HCT116 (cell line): ENCODE measurements at regions of chr14 and their contacts with region 1.

Region 1: GRCh38 chr14:57871459-57872080 is 5.7 kb upstream of the SLC35F4 start:
- DNase-seq: peak; percentile 35
- ATAC-seq: peak; percentile 88
- H3K4me3 ChIP-seq: no peak overlapping the region
- H3K27ac ChIP-seq: no peak overlapping the region
- H3K4me1 ChIP-seq: no peaks in the 10 kb centered on the region
- H3K27me3 ChIP-seq: peaks cover 21% of the 10 kb centered on the region; the same call in 1 of the 2 replicates
- CTCF ChIP-seq: peak; percentile 64 to 89 (median 83); a peak in 5 of 6 replicates
- POLR2A ChIP-seq: no peak
- RAD21 ChIP-seq: peak; percentile 74

Region 2: GRCh38 chr14:57461777-57462320 is 409.7 kb before region 1 on chr14:
- CTCF ChIA-PET with region 1: no interaction called
- POLR2A ChIA-PET with region 1: no interaction called
- RAD21 ChIA-PET with region 1: no interaction called
- intact Hi-C with region 1: no loop called
- DNase-seq: no peak
- ATAC-seq: 0 out of 2 replicates have a peak, but pooled peaks have one; percentile 20
- H3K4me3 ChIP-seq: no peak overlapping the region
- H3K27ac ChIP-seq: no peak overlapping the region
- H3K4me1 ChIP-seq: peaks cover 5 to 12% of the 10 kb centered on the region in 2 experiments; a peak in 3 of 4 replicates
- H3K27me3 ChIP-seq: no peaks in the 10 kb centered on the region
- CTCF ChIP-seq: no peak
- POLR2A ChIP-seq: no peak
- RAD21 ChIP-seq: no peak

Region 3: GRCh38 chr14:57533214-57533613 is 338.4 kb before region 1 on chr14:
- CTCF ChIA-PET with region 1: no interaction called
- POLR2A ChIA-PET with region 1: no interaction called
- RAD21 ChIA-PET with region 1: no interaction called
- intact Hi-C with region 1: loop called (anchors 5 kb)
- DNase-seq: peak; percentile 22
- ATAC-seq: 0 out of 2 replicates have a peak, but pooled peaks have one; percentile 62
- H3K4me3 ChIP-seq: no peak overlapping the region
- H3K27ac ChIP-seq: no peak overlapping the region
- H3K4me1 ChIP-seq: no peaks in the 10 kb centered on the region
- H3K27me3 ChIP-seq: peaks cover 35% of the 10 kb centered on the region
- CTCF ChIP-seq: peak; percentile 31 to 61 (median 50); a peak in 5 of 6 replicates
- POLR2A ChIP-seq: no peak
- RAD21 ChIP-seq: peak; percentile 60

Region 4: DNA sequence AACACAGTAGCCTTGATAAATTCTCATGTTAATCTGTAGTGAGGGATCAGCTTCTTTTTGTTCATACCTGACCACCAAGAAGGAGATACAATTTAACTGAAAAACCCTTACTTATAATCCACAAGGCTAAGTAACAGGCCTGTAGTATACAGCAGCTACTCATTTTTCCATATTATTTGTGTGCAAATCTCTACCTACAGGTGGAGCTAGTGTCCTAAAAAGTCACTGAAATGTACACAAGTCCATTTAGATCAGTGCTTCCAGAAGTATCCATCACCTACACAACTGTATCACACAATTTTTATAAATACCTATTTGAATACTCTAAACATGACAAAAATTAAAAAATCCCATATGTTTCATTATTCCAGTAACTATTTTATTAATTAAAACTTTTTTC is 178.9 kb before region 1 on chr14:
- CTCF ChIA-PET with region 1: interaction called, 55 read pairs
- POLR2A ChIA-PET with region 1: no interaction called
- RAD21 ChIA-PET with region 1: interaction called in 1 of 2 experiments, 4 read pairs
- intact Hi-C with region 1: loop called (anchors 1 kb)
- DNase-seq: peak; percentile 49
- ATAC-seq: peak; percentile 81
- H3K4me3 ChIP-seq: no peak overlapping the region
- H3K27ac ChIP-seq: no peak overlapping the region
- H3K4me1 ChIP-seq: no peaks in the 10 kb centered on the region
- H3K27me3 ChIP-seq: peaks cover 11% of the 10 kb centered on the region; the same call in 1 of the 2 replicates
- CTCF ChIP-seq: peak; percentile 59 to 70 (median 64)
- POLR2A ChIP-seq: no peak
- RAD21 ChIP-seq: peak; percentile 73

Region 5: DNA sequence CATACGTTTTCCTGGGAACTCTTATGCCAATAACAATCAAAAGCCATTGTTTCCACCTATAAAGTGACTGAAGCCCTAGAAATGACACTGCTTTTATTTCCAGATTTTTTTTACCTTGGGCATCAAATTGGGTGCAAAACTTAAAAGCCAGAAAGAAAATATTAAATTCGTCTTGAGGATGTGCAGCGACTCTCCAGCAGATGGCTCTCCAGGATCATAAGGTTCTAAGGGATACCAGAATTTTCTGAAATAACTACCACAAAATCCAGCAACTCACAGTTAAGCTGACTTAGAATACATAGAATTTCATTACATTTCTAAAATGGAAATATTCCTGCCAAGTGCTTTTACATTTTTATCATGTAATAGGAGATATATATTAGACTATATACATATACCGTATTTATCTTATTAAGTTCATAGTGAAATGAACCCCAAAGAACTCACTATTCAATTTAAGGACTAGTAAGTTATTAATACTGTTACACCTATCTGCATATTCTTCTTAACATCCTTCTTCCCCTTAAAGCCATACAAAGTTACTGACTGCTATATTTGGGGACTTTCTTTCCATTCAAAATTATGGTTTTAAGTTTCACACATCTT is 236.5 kb after region 1 on chr14:
- CTCF ChIA-PET with region 1: no interaction called
- POLR2A ChIA-PET with region 1: no interaction called
- RAD21 ChIA-PET with region 1: no interaction called
- intact Hi-C with region 1: no loop called
- DNase-seq: peak; percentile 52
- ATAC-seq: peak; percentile 76
- H3K4me3 ChIP-seq: no peak overlapping the region
- H3K27ac ChIP-seq: no peak overlapping the region
- H3K4me1 ChIP-seq: no peaks in the 10 kb centered on the region
- H3K27me3 ChIP-seq: 0 out of 2 replicates have a peak, but pooled peaks cover 12% of the 10 kb centered on the region
- CTCF ChIP-seq: peak; percentile 71 to 79 (median 76)
- POLR2A ChIP-seq: no peak
- RAD21 ChIP-seq: peak; percentile 84